ENCODE measurements at regions of chr18 and their contacts with region 1.

Region 1: DNA sequence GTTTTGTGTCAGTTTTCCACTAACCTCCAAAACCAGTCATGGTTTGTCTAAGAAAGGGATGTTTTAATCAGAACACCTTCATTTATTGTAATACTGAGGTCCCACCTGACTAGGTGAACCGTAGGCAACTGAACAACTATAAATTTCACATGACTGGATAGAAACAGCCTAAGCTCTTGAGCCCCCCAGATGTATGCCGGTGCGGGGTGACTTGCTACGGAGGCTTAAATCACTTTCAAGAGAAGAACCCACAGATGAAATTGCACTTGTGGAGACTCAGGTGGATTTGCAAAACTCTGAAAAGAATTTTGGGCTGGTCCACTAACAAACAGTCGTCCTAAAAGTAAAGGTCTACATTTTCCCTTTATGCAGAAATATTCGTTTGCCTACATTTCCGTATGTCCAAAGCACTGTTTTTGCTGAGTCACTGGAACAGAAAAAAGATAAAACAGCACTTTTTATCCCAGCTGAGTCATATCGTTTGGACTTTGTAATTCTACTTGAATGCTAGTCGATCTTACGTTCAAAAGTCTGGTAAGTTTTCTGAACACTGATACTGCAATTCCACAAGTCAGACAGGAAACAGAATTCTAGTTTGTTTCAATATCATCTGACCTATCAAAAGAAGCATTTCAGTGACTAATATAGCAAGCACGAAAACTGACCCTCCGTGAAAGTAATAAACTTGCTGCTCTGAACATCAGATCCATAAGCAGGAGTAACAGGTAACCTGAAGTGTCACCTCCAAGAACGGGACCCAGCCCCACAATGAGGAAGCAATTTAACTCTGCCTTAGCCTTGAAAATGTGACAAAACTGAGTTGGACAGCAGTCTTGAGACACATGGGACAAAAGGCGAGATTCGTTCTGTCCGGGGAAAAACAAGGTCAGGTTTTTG is 18.1 kb downstream of the ZNF516 start:
- DNase-seq: no peak
- H3K4me3 ChIP-seq: peak overlapping the region in 2 of 3 donors; percentile 16 to 17
- H3K27ac ChIP-seq: peak overlapping the region; percentile 27 to 40
- H3K4me1 ChIP-seq: no peaks in the 10 kb centered on the region
- H3K27me3 ChIP-seq: no peaks in the 10 kb centered on the region
- CTCF ChIP-seq: no peak
- POLR2A ChIP-seq: no peak

Region 2: GRCh38 chr18:77959248-77959647 is 1482.3 kb after region 1 on chr18:
- intact Hi-C with region 1: loop called (anchors 10 kb)
- DNase-seq: no peak
- H3K4me3 ChIP-seq: no peak overlapping the region
- H3K27ac ChIP-seq: no peak overlapping the region
- H3K4me1 ChIP-seq: no peaks in the 10 kb centered on the region
- H3K27me3 ChIP-seq: peaks cover 0 to 3% of the 10 kb centered on the region in 2 donors
- CTCF ChIP-seq: no peak
- POLR2A ChIP-seq: no peak

Measured in breast epithelium (tissue), 4 donors.